GM12878 (cell line): ENCODE measurements at regions of chr5 and their contacts with region 1.

Region 1: DNA sequence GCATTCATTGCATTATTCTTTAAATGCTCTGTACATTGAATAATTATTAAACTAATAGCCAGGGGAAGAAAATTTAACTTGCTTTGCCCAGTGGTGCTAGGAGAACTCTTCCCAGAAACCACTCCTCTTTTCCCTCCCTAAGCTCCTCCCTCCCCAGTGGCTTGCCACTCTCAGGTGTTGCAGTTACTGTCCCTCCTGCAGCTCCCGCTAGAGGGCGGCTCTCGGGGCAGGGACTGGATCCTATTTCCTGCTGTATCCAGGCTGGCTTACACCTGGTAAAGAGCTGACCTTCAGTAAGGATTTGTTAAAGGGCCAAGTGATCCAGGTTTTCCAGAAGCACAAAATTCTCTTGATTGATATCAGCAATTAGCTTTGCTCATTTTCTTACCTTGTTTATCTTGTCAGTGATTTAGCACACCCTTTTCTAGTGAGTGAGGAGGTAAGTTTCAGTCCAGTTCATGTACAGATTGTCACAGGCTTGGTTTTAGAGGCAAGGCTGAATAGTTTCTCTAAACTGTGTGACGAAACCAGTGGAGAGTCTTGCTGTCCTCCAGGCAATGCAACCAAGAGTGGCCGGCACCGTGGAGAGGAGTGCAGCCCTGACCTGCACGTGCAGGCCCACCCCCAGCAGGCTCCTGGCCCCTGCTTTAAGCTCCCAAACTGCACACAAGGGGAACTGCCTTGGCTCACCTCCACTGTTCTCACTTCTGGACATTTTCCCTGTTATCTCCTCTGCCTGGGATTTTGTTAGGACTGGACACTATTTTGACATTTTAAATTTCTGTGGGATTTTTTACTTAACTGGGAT is 423.8 kb downstream of the SPOCK1 start:
- DNase-seq: no peak
- ATAC-seq: peak; percentile 95
- H3K4me3 ChIP-seq: no peak overlapping the region
- H3K27ac ChIP-seq: no peak overlapping the region
- H3K4me1 ChIP-seq: no peaks in the 10 kb centered on the region
- H3K27me3 ChIP-seq: no peaks in the 10 kb centered on the region; a peak in 1 of 4 replicates
- CTCF ChIP-seq: peak; percentile 65 to 68 (median 68)
- EP300 ChIP-seq: no peak
- POLR2A ChIP-seq: no peak
- RAD21 ChIP-seq: no peak

Region 2: GRCh38 chr5:137086342-137086741 is 11.0 kb after region 1 on chr5:
- CTCF ChIA-PET with region 1: interaction called, 10 read pairs
- POLR2A ChIA-PET with region 1: no interaction called
- RAD21 ChIA-PET with region 1: no interaction called
- SMC1A ChIA-PET with region 1: interaction called, 3 read pairs
- in situ Hi-C with region 1: no loop called
- intact Hi-C with region 1: no loop called
- DNase-seq: no peak
- ATAC-seq: no peak
- H3K4me3 ChIP-seq: no peak overlapping the region
- H3K27ac ChIP-seq: no peak overlapping the region
- H3K4me1 ChIP-seq: no peaks in the 10 kb centered on the region
- H3K27me3 ChIP-seq: 0 out of 4 replicates have a peak, but pooled peaks cover 0 to 3% of the 10 kb centered on the region in 2 experiments
- CTCF ChIP-seq: no peak
- EP300 ChIP-seq: no peak
- POLR2A ChIP-seq: no peak
- RAD21 ChIP-seq: no peak

Region 3: GRCh38 chr5:137220523-137220927 is 145.2 kb after region 1 on chr5:
- CTCF ChIA-PET with region 1: no interaction called
- POLR2A ChIA-PET with region 1: no interaction called
- RAD21 ChIA-PET with region 1: no interaction called
- SMC1A ChIA-PET with region 1: no interaction called
- in situ Hi-C with region 1: no loop called
- intact Hi-C with region 1: loop called (anchors 2 kb)
- DNase-seq: no peak
- ATAC-seq: peak; percentile 98
- H3K4me3 ChIP-seq: no peak overlapping the region
- H3K27ac ChIP-seq: no peak overlapping the region
- H3K4me1 ChIP-seq: no peaks in the 10 kb centered on the region
- H3K27me3 ChIP-seq: no peaks in the 10 kb centered on the region; a peak in 1 of 4 replicates
- CTCF ChIP-seq: peak; percentile 44 to 63 (median 57); a peak in 5 of 6 replicates
- EP300 ChIP-seq: no peak
- POLR2A ChIP-seq: no peak
- RAD21 ChIP-seq: peak; percentile 43